ENCODE measurements at regions of chr15 and their contacts with region 1.

Region 1: GRCh38 chr15:80152180-80152845 is 486 bp upstream of the FAH start:
- DNase-seq: peak; percentile 99
- H3K4me3 ChIP-seq: peak overlapping the region; percentile 64 to 89 (median 79)
- H3K27ac ChIP-seq: peak overlapping the region; percentile 84 to 86 (median 85)
- H3K4me1 ChIP-seq: peaks cover 10 to 34% (median 20%) of the 10 kb centered on the region in 4 donors
- H3K27me3 ChIP-seq: no peaks in the 10 kb centered on the region
- CTCF ChIP-seq: no peak
- EP300 ChIP-seq: no peak
- POLR2A ChIP-seq: no peak

Region 2: GRCh38 chr15:79923515-79924395 is 228.6 kb before region 1 on chr15:
- intact Hi-C with region 1: loop called (anchors 2 kb)
- DNase-seq: peak; percentile 97
- H3K4me3 ChIP-seq: peak overlapping the region; percentile 65 to 90 (median 86)
- H3K27ac ChIP-seq: peak overlapping the region; percentile 86 to 96 (median 92)
- H3K4me1 ChIP-seq: peaks cover 11 to 17% (median 14%) of the 10 kb centered on the region in 4 donors
- H3K27me3 ChIP-seq: no peaks in the 10 kb centered on the region
- CTCF ChIP-seq: no peak
- EP300 ChIP-seq: no peak
- POLR2A ChIP-seq: peak; percentile 64

Region 3: GRCh38 chr15:80058851-80059785 is 93.2 kb before region 1 on chr15 and contains the start of gene ZFAND6:
- intact Hi-C with region 1: loop called (anchors 2 kb)
- DNase-seq: peak; percentile 97
- H3K4me3 ChIP-seq: peak within 1 kb of the TSS; percentile 90 to 98 (median 92)
- H3K27ac ChIP-seq: peak within 1 kb of the TSS; percentile 91 to 98 (median 96)
- H3K4me1 ChIP-seq: peaks cover 14 to 39% (median 35%) of the 10 kb centered on the region in 4 donors
- H3K27me3 ChIP-seq: no peaks in the 10 kb centered on the region
- CTCF ChIP-seq: peak in 2 of 3 experiments; percentile 2 to 23
- EP300 ChIP-seq: no peak
- POLR2A ChIP-seq: peak; percentile 57
- total RNA-seq, gene ZFAND6: 80.2 to 134 (median 107) TPM

Measured in esophagus muscularis mucosa (tissue), 4 donors.